Sciatic nerve (tissue), 2 donors: ENCODE measurements at regions of chr16 and their contacts with region 1.

Region 1: DNA sequence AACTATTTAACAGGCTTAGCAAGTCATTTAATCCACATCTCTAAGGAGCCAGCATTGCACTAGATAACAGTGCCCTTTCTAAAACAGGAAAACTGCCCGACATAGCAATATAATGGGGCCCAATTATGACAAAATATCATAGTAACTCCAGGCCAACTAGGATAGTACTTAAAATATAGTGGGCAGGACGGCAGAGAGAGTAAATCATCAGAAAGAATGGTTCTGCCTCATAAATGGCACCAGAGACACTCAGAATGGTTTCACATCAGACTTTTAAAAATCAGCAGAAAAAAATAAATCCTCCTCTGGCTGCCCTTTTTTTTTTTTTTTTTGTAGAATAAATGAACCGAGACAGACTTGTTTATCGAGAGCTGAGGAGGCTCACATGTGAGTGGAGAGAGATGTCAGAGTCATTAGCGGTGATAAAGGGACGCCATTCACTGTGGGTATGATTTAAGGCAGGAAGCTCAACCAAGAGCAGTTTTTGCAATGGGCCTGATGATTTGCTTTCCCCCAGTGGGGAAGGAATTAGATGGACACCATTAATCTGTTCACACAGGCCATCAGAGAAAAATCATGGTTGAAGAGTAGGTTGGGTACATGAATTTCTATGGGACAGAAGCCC is 62.6 kb downstream of the CPPED1 start:
- DNase-seq: no peak
- ATAC-seq: no peak

Region 2: GRCh38 chr16:13629704-13630103 is 888.6 kb after region 1 on chr16:
- intact Hi-C with region 1: loop called (anchors 5 kb)
- DNase-seq: no peak
- ATAC-seq: no peak